Mammary epithelial cell (primary cell): ENCODE measurements at regions of chr1 and their contacts with region 1.

Region 1: GRCh38 chr1:244970661-244971551 is 106.6 kb upstream of the HNRNPU start:
- DNase-seq: peak; percentile 96
- H3K4me3 ChIP-seq: peak overlapping the region; percentile 62 to 75 (median 68)
- H3K27ac ChIP-seq: peak overlapping the region; percentile 92
- H3K4me1 ChIP-seq: peaks cover 3% of the 10 kb centered on the region
- H3K27me3 ChIP-seq: no peaks in the 10 kb centered on the region
- CTCF ChIP-seq: peak; percentile 3 to 62

Region 2: DNA sequence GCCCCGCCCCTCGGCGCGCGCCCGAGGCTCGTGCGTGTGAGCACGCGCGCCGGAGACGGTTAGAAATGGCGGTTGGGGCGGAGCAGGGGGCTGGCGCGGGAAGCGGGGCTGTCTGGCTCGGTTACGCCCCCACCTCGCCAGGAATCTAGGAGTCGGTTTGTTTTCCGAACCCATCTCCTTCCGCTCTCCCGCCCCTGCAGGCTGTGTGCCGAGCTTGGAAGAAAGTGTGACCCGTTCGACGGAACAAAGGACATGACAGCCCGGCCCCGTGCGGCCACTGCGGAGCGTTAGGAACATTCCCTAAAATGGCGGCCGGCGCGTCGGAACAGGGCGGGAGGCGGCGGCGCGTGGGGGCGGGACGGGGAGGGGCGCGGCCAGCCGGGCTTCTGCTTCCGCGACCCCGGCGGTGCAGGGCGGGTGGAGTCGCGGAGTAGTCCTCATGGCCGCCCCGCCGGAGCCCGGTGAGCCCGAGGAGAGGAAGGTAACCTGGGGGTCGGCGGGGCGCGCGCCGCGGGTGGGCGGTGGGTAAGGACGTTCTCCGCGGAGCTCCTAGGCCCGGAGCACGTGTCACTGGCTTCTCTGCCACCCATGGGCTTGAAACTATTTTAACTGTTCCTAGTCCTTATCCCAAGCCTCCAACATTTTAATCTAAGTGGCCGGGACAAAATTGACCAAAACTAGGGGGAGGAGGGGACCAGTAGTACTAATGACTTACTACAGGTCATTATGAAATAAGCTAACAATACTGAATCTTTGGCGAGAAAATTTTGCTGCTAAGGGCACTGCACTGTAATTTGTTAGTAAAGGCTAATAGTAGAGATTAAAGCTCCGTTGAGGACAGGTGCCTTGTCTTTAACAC is 135.4 kb before region 1 on chr1 and contains the start of gene COX20:
- CTCF ChIA-PET with region 1: no interaction called
- dilution Hi-C with region 1: no loop called
- in situ Hi-C with region 1: no loop called
- intact Hi-C with region 1: loop called (anchors 1 kb)
- DNase-seq: peak; percentile 86
- H3K4me3 ChIP-seq: peak within 1 kb of the TSS; percentile 72 to 83 (median 81)
- H3K27ac ChIP-seq: peak within 1 kb of the TSS; percentile 94
- H3K4me1 ChIP-seq: peaks cover 12% of the 10 kb centered on the region
- H3K27me3 ChIP-seq: no peaks in the 10 kb centered on the region
- CTCF ChIP-seq: no peak
- total RNA-seq, gene COX20: 13.7 to 35.4 TPM

Region 3: DNA sequence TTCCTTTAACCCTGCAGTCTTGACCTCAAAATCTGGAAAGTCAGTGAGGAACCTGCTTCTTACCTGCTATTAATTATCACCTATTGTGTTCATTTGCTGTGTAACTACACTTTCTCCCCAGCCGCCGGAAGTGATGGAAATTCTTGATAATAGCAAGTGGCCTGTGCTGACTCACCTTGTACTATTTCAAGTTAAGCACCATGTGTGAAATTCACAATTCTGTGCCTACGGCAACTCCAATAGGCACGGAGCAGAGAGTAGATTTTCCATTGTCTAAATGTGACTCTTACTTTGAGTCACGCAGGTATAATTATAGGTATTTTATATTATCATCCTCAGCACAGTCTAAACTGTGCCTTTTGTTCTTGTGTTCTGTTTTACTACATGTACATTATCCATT is 650.7 kb after region 1 on chr1:
- CTCF ChIA-PET with region 1: no interaction called
- dilution Hi-C with region 1: no loop called
- in situ Hi-C with region 1: no loop called
- intact Hi-C with region 1: no loop called
- DNase-seq: peak; percentile 25
- H3K4me3 ChIP-seq: no peak overlapping the region
- H3K27ac ChIP-seq: no peak overlapping the region
- H3K4me1 ChIP-seq: no peaks in the 10 kb centered on the region
- H3K27me3 ChIP-seq: no peaks in the 10 kb centered on the region
- CTCF ChIP-seq: no peak